ENCODE measurements at regions of chr1 and their contacts with region 1.

Region 1: DNA sequence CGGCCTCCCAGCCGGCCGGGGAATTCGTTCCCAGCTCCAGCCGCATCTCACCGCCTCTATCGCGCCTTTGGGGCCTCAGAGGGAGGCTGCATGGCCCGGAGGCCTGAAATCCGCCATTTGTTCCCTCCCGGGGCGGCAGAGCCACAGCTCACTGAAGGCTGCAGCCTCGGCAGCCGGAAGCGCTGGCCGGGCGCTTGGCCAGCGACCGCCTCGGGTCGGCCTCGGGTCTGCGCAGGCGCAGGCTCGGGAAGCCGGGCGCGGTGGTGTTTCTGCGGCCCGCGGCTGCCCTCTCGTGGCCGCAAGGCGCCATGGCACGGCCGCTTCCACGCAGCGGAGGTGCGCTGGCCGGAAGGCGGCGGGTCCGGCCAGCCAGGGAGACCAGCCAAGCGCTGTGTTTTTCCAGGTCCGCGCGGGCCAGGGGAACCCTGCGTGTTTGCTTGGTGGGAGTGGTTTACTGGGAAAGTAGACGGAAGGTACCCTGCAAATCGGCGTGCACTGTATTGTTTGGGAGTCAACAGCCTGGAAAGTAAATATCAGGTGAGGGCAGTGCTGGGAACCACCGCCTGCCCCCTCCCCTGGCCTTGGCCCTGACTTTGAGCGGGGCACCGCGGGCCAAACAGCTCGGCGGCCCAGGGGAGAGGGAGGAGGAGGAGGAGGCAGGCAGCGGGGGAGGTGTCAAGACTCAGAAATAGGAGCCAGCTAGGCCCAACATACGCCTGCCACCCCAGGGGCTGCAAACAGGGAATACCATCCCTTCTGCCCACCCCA is 52.7 kb upstream of the CD34 start:
- DNase-seq: peak; percentile 84
- H3K4me3 Mint-ChIP-seq: peak overlapping the region; percentile 83
- H3K27ac Mint-ChIP-seq: no peak overlapping the region
- H3K4me1 Mint-ChIP-seq: peaks cover 11% of the 10 kb centered on the region
- H3K27me3 Mint-ChIP-seq: peaks cover 38% of the 10 kb centered on the region

Region 2: GRCh38 chr1:207644852-207645634 is 318.6 kb before region 1 on chr1 and contains the start of gene CR1L:
- intact Hi-C with region 1: loop called (anchors 1 kb)
- DNase-seq: peak; percentile 74
- H3K4me3 Mint-ChIP-seq: peak within 1 kb of the TSS; percentile 80
- H3K27ac Mint-ChIP-seq: no peak within 1 kb of the TSS
- H3K4me1 Mint-ChIP-seq: peaks cover 8% of the 10 kb centered on the region
- H3K27me3 Mint-ChIP-seq: peaks cover 26% of the 10 kb centered on the region
- total RNA-seq, gene CR1L: not detected in 2 replicates

Region 3: DNA sequence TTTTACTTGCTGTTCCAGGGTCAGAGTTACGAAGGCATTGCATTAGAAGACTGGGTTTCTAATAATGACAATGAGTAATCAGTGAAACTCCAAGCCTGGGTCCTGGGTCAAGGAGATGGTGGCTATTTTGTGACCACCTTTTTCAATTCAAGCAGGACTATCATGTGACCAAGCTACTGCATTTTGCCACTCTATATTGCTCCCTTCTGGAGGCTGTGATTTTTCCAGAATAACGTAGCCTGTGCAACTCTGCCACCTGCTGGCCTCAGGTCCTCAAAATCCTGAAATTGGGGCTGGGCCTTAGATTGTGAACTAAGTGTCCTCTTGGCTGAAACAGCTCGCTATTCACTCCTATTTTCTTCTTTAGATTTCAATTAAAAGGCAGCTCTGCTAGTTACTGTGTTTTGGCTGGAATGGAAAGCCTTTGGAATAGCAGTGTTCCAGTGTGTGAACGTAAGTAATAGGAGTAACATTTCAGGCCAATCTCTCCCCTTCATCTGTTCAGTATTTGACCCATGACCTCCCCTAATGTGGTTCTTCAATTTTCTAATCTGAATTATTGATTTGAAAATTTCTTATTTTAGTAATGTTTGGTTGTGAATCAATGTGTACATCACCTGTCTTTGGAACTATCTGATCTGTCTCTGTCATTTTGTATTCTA is 264.7 kb before region 1 on chr1:
- intact Hi-C with region 1: loop called (anchors 10 kb)
- DNase-seq: no peak
- H3K4me3 Mint-ChIP-seq: no peak overlapping the region
- H3K27ac Mint-ChIP-seq: no peak overlapping the region
- H3K4me1 Mint-ChIP-seq: no peaks in the 10 kb centered on the region
- H3K27me3 Mint-ChIP-seq: peaks cover 10% of the 10 kb centered on the region

Region 4: DNA sequence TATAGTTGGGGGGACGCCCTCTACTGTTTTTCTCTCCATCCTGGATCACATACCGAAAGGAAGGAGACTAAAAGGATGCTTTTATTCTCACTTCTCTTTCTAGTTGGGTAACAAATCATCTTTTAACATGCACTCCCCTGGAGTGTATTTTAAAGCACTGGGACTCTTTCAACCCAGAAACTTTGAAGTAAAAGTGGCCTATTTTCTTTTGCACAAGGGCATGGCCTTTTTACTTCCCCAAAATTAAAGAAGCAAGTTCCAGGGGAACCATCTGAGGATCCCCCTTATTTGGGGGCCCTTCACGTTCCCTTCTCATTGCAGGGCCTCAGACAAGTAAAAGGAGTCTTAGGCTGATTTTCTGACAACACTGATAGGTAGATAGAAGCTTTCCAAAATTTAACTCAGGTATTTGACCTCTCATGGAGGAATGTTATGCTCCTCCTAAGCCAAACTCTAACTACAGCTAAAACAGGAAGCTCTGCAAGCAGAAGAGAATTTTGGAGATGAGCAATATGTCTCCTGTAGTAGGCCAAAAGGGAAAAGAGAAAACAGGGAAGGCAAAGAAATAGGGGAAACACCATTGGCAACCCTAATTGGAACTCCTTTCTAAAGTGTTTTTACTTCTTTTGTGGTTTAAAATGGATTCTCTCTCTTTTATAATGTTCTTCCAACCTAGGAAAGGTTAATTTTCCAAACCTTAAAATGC is 220.6 kb before region 1 on chr1:
- intact Hi-C with region 1: no loop called
- DNase-seq: no peak
- H3K4me3 Mint-ChIP-seq: no peak overlapping the region
- H3K27ac Mint-ChIP-seq: no peak overlapping the region
- H3K4me1 Mint-ChIP-seq: no peaks in the 10 kb centered on the region
- H3K27me3 Mint-ChIP-seq: peaks cover 13% of the 10 kb centered on the region

Region 5: GRCh38 chr1:208007938-208008342 is 44.3 kb after region 1 on chr1:
- intact Hi-C with region 1: no loop called
- DNase-seq: no peak
- H3K4me3 Mint-ChIP-seq: no peak overlapping the region
- H3K27ac Mint-ChIP-seq: no peak overlapping the region
- H3K4me1 Mint-ChIP-seq: no peaks in the 10 kb centered on the region
- H3K27me3 Mint-ChIP-seq: peaks cover 9% of the 10 kb centered on the region

Region 6: DNA sequence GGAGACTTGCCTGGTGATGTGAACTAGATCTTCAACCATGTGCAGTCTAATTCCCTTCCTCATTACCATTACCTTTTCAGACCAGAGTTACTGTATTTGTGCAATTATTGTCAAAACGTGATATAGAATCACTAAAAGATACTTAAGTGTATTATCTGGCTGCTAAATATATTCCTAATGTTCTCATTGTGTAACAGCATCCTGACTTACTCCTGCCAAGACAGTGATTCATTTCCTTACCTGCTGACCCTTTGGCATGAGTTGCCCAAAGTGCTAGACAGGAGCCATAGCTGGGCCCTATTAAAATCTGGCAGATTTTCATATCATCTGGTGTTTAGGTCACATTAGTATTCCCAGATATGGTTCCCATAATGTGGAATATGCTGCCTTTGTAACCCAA is 1021.6 kb after region 1 on chr1:
- intact Hi-C with region 1: no loop called
- DNase-seq: no peak
- H3K4me3 Mint-ChIP-seq: no peak overlapping the region
- H3K27ac Mint-ChIP-seq: no peak overlapping the region
- H3K4me1 Mint-ChIP-seq: peaks cover 20% of the 10 kb centered on the region
- H3K27me3 Mint-ChIP-seq: peaks cover 6% of the 10 kb centered on the region